PC-9 (cell line): ENCODE measurements at regions of chr14 and their contacts with region 1.

Region 1: GRCh38 chr14:73227812-73228781 is 9.2 kb upstream of the PAPLN start:
- DNase-seq: peak; percentile 43 to 51
- H3K4me3 ChIP-seq: no peak overlapping the region
- H3K27ac ChIP-seq: peak overlapping the region; percentile 30; the same call in 1 of the 2 replicates
- H3K4me1 ChIP-seq: peaks cover 19% of the 10 kb centered on the region
- H3K27me3 ChIP-seq: peaks cover 3% of the 10 kb centered on the region; the same call in 1 of the 2 replicates
- CTCF ChIP-seq: no peak

Region 2: GRCh38 chr14:73209953-73210352 is 18.1 kb before region 1 on chr14:
- CTCF ChIA-PET with region 1: interaction called, 13 read pairs
- POLR2A ChIA-PET with region 1: interaction called, 8 read pairs
- intact Hi-C with region 1: no loop called
- DNase-seq: no peak
- H3K4me3 ChIP-seq: no peak overlapping the region
- H3K27ac ChIP-seq: no peak overlapping the region
- H3K4me1 ChIP-seq: no peaks in the 10 kb centered on the region
- H3K27me3 ChIP-seq: no peaks in the 10 kb centered on the region
- CTCF ChIP-seq: no peak

Region 3: DNA sequence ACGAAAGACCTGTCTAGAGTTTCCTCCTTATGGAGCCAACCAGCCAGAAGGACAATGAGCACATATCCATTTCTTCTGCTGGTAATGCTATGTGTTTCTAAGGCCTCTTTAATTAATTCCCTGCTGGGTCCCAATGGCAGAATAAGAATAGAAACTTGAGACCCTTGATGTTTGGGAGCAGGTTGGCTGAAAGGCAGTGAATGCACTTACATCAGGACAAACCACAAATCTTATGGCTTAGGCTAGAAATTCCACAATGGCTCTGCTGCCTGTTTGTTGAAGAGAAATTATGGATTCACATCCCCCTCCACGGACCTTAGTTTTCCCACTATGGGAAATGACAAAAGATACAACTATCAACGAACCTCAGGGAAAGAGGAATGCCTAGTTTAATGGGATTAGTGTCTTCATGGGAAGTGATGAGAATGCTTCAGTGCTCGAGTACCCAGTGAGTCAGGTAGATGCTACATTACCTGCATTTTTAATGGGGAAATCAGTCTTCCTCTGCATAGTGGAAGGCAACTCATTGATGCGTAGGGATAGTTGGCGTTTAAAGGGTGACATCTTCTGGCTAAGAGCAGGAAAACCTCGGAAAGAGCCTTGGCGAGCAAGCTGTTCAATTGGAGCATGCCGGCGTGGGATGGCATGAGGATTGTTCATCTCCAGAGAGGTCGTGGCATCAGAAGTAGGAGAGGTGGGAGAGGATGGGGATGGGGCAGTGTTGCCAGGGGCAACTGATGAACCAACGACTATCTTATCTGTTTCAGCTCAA is 55.7 kb after region 1 on chr14:
- CTCF ChIA-PET with region 1: interaction called, 10 read pairs
- POLR2A ChIA-PET with region 1: interaction called, 3 read pairs
- intact Hi-C with region 1: no loop called
- DNase-seq: no peak
- H3K4me3 ChIP-seq: no peak overlapping the region
- H3K27ac ChIP-seq: no peak overlapping the region
- H3K4me1 ChIP-seq: no peaks in the 10 kb centered on the region
- H3K27me3 ChIP-seq: no peaks in the 10 kb centered on the region
- CTCF ChIP-seq: no peak

Region 4: DNA sequence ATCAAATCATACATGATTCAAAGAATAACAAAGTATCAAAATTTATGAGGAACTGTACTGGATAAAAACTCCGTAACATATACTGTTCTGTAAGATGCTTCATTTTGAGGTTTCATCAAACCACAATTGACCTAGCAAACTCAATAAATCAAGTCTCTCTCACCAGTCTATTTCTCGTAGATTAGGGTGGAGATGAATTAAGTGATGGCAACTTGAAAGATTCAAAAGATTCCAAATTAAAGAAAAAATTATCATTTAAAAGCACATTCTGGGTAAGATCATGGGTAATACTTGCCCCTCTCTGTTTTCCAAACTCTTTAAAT is 83.6 kb after region 1 on chr14:
- CTCF ChIA-PET with region 1: no interaction called
- POLR2A ChIA-PET with region 1: no interaction called
- intact Hi-C with region 1: no loop called
- DNase-seq: no peak
- H3K4me3 ChIP-seq: no peak overlapping the region
- H3K27ac ChIP-seq: no peak overlapping the region
- H3K4me1 ChIP-seq: peaks cover 8% of the 10 kb centered on the region; the same call in 1 of the 2 replicates
- H3K27me3 ChIP-seq: no peaks in the 10 kb centered on the region
- CTCF ChIP-seq: no peak